Thyroid gland (tissue), 4 donors: ENCODE measurements at regions of chr2 and their contacts with region 1.

Region 1: DNA sequence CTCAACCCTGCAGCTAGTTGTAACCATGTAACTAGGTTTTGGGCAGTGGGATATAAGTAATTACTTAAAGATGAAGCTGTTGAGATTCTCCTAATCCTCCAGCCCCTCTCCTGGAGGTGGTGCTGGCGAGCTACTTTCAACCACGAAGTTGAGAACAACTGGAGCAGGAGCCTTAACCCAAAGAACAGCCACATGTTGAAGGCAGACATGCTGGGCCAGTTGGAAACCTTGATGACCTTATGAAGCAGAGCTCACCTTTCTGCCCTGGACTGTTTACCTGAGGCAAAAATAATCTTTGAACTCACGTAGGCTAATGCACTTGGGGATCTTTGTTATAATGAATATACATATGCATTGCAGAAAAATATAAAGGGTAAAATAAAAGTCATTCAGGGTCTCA is 89.6 kb upstream of the NPAS2 start:
- DNase-seq: peak; percentile 63 to 74
- H3K4me3 ChIP-seq: no peak overlapping the region
- H3K27ac ChIP-seq: no peak overlapping the region
- H3K4me1 ChIP-seq: no peaks in the 10 kb centered on the region
- H3K27me3 ChIP-seq: no peaks in the 10 kb centered on the region
- CTCF ChIP-seq: peak in 5 of 6 experiments; percentile 16 to 72 (median 66)
- POLR2A ChIP-seq: no peak

Region 2: GRCh38 chr2:100548771-100549170 is 181.6 kb before region 1 on chr2:
- intact Hi-C with region 1: no loop called
- DNase-seq: no peak
- H3K4me3 ChIP-seq: no peak overlapping the region
- H3K27ac ChIP-seq: no peak overlapping the region
- H3K4me1 ChIP-seq: no peaks in the 10 kb centered on the region
- H3K27me3 ChIP-seq: no peaks in the 10 kb centered on the region
- CTCF ChIP-seq: no peak
- POLR2A ChIP-seq: no peak

Region 3: GRCh38 chr2:100984892-100985379 is 254.6 kb after region 1 on chr2:
- intact Hi-C with region 1: loop called (anchors 5 kb)
- DNase-seq: peak; percentile 76 to 80
- H3K4me3 ChIP-seq: no peak overlapping the region
- H3K27ac ChIP-seq: no peak overlapping the region
- H3K4me1 ChIP-seq: no peaks in the 10 kb centered on the region
- H3K27me3 ChIP-seq: no peaks in the 10 kb centered on the region
- CTCF ChIP-seq: peak; percentile 57 to 97 (median 86)
- POLR2A ChIP-seq: no peak